ENCODE measurements at regions of chr2 and their contacts with region 1.

Region 1: DNA sequence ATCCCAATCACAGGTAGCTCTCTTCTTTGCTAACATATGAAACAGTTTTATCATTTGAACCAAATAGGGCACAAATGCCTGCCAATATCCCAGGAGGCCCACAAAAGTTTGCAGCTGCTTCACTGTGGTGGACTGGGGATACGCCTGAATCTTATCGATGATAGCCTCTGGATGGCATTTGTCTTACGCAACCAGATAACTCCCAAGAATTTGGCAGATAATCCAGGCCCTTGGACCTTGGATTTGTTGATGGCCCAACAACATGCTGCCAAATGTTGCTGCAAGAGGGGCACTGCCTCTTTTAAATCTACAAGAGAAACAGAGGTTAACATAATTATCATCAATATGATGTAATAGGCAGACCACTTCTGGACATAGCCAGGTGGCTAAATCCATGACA is 587.1 kb upstream of the LRRTM4 start:
- DNase-seq: no peak
- ATAC-seq: no peak
- H3K4me3 ChIP-seq: no peak overlapping the region
- H3K27ac ChIP-seq: no peak overlapping the region
- H3K4me1 ChIP-seq: no peaks in the 10 kb centered on the region
- H3K27me3 ChIP-seq: no peaks in the 10 kb centered on the region
- CTCF ChIP-seq: no peak
- POLR2A ChIP-seq: no peak
- RAD21 ChIP-seq: no peak

Region 2: DNA sequence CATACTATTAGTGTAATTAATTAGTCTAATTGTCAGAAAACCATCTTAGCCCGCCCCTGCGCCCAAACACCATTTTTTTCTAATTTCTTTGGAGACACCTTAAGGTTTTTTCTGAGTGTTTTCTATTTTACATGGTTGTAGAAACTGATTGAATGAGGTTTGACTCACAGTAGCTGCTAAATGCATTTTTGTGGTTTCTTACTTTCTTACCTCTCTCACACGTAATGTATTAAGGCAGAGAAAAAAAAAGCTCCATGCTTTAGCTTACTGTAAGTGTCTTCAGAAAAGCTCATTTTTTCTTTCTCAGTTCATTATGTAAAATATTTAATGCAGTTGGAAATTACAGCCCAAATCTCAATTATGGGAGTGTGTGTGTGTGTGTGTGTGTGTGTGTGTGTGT is 38.6 kb before region 1 on chr2:
- CTCF ChIA-PET with region 1: no interaction called
- POLR2A ChIA-PET with region 1: no interaction called
- dilution Hi-C with region 1: no loop called
- in situ Hi-C with region 1: no loop called
- intact Hi-C with region 1: no loop called
- DNase-seq: no peak
- ATAC-seq: no peak
- H3K4me3 ChIP-seq: no peak overlapping the region
- H3K27ac ChIP-seq: no peak overlapping the region
- H3K4me1 ChIP-seq: no peaks in the 10 kb centered on the region
- H3K27me3 ChIP-seq: no peaks in the 10 kb centered on the region
- CTCF ChIP-seq: no peak
- POLR2A ChIP-seq: no peak
- RAD21 ChIP-seq: no peak

Region 3: GRCh38 chr2:78132391-78133370 is 23.4 kb after region 1 on chr2:
- CTCF ChIA-PET with region 1: no interaction called
- POLR2A ChIA-PET with region 1: no interaction called
- dilution Hi-C with region 1: no loop called
- in situ Hi-C with region 1: no loop called
- intact Hi-C with region 1: loop called (anchors 2 kb)
- DNase-seq: no peak
- ATAC-seq: no peak
- H3K4me3 ChIP-seq: no peak overlapping the region
- H3K27ac ChIP-seq: no peak overlapping the region
- H3K4me1 ChIP-seq: no peaks in the 10 kb centered on the region
- H3K27me3 ChIP-seq: no peaks in the 10 kb centered on the region
- CTCF ChIP-seq: no peak
- POLR2A ChIP-seq: no peak
- RAD21 ChIP-seq: no peak

Measured in IMR-90 (cell line).